CD8-positive, alpha-beta T cell (primary cell): ENCODE measurements at regions of chr6 and their contacts with region 1.

Region 1: DNA sequence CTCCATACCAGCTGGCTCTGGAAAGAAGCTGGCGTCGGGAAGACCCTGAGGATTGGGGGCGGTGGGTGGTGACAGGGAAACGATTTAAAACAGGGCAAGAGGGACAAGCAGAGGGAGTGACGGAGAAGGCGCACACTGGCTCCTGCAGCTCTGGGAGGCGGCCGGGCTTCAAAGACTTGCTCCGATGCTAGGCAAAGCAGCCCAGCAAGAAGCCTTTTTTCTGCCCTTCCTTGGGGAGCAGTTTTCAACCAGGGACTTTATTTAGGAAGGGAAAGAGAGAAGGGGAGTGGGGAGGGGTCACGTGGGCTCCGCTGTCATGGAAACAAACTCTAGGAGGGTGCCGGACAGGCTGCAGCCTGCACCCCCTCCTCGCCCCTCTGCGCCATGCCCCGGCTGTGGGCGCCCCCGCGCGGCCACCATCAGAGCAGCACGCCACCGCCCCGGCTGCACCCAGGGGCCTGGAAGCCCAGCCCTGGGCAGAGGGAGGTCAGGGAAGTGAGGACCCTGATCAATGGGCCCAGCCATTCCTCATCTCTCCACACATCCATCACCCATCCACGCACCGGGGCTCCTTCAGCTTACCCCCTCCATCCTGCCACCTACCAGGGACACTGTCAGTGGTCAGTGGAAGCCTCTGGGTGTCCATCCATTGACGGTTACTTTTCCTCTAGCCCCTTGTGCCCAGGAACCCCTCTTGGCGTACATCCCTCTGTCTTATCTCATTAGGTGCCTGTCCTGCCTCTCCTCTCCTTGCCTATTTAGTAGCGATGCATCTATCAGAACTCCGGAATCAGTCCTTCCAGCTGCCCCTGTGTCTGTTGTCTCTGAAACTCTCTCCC is 66.6 kb upstream of the CCDC167 start:
- DNase-seq: peak; percentile 41 to 89 (median 72)
- ATAC-seq: peak; percentile 95
- H3K4me3 ChIP-seq: peak overlapping the region; percentile 2 to 43
- H3K4me3 Mint-ChIP-seq: peak overlapping the region; percentile 39
- H3K27ac ChIP-seq: no peak overlapping the region
- H3K27ac Mint-ChIP-seq: no peak overlapping the region
- H3K4me1 ChIP-seq: peaks cover 3% of the 10 kb centered on the region
- H3K4me1 Mint-ChIP-seq: peaks cover 13% of the 10 kb centered on the region
- H3K27me3 ChIP-seq: peaks cover 0 to 5% of the 10 kb centered on the region in 2 experiments
- H3K27me3 Mint-ChIP-seq: no peaks in the 10 kb centered on the region
- CTCF ChIP-seq: peak; percentile 94

Region 2: DNA sequence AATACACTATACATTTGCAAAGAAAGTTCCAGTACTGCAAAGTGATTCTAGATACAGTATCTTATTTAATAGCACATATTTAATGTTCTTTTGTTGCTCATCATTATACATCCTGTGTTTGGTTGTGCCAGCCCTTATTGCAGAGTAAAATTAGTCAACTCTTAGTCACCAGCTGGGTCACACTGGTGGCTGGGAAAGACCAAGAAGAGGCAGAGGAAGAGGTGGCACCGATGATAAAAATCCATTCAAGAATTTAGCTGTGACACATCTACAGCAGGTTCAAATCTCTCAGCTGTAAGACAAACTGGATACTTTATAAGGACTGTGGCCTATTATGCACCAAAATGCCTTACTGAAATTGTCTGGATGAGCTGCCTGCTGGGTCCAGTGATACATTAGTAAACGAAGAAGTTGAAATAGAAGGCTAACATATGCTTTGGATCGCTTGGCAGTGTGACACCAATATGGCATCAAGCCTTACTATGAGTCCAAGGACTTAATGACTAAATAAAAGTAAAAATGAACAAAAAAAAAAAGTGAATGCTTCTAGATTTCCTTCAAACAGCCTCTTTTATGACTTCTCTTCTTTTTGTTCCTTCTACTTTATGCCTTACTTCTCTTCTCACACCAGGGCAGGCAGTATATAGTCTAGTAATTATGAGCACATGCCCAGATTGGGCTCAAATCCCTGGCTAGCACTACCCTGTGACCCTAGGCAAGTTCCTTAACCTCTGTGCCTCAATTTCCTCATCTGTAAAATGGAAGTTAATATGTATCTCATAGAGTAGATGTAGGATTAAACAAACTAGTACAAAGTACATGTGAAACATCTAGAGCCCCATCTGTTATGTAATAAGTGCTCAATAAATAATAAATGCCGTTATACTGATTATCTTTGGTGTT is 241.9 kb before region 1 on chr6:
- CTCF ChIA-PET with region 1: interaction called, 8 read pairs
- POLR2A ChIA-PET with region 1: interaction called, 3 read pairs
- intact Hi-C with region 1: loop called in 1 of 2 experiments (anchors 1 kb)
- DNase-seq: no peak
- ATAC-seq: no peak
- H3K4me3 ChIP-seq: no peak overlapping the region
- H3K4me3 Mint-ChIP-seq: no peak overlapping the region
- H3K27ac ChIP-seq: no peak overlapping the region
- H3K27ac Mint-ChIP-seq: no peak overlapping the region
- H3K4me1 ChIP-seq: no peaks in the 10 kb centered on the region
- H3K4me1 Mint-ChIP-seq: no peaks in the 10 kb centered on the region
- H3K27me3 ChIP-seq: no peaks in the 10 kb centered on the region
- H3K27me3 Mint-ChIP-seq: no peaks in the 10 kb centered on the region
- CTCF ChIP-seq: no peak

Region 3: DNA sequence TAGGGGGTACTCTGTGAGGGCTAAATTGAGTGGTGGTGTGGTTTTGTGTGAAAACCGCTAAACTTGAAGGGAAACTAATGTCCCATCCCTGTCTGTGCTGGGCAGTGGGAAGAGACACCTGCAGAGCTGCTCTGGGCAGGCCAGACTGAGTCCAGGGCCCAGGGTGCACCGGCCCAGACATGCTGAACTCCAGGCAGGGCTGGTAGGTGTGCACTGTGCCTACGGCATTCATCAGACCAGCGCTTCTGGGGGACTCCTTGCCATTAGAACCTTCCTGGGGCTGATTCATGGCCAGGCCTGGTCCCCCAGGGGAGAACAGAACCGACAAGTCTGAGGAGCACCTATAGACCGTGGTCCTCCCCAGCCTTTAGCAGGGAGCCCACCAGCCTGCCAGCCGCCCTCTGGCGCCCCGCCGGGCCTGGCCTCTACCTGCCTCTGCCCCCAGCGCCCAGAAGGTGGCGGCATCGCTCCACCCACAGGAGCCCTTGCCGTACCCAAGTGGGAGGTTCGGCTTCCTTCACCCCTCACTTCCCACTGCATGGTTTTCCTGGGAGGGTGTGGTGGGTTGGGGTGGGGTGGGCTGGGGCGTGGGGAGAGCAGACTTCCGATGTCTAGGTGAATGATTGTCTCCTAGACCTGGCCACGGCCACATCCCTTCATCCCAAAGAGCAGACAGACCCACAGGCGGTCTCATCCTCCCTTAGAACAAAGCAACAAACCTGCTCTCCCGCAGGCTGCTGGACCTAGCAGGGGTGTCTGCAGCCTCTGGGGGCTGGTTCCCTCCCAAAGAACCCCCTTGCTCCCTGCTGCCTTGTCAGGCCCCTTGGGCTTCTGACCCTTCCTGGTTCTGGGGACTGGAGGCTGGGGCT is 82.2 kb before region 1 on chr6:
- CTCF ChIA-PET with region 1: interaction called, 191 read pairs
- POLR2A ChIA-PET with region 1: no interaction called
- intact Hi-C with region 1: loop called (anchors 1 kb)
- DNase-seq: peak; percentile 59 to 90 (median 77)
- ATAC-seq: peak; percentile 93
- H3K4me3 ChIP-seq: no peak overlapping the region
- H3K4me3 Mint-ChIP-seq: no peak overlapping the region
- H3K27ac ChIP-seq: peak overlapping the region in 1 of 2 experiments; percentile 47
- H3K27ac Mint-ChIP-seq: no peak overlapping the region
- H3K4me1 ChIP-seq: peaks cover 14% of the 10 kb centered on the region
- H3K4me1 Mint-ChIP-seq: peaks cover 13% of the 10 kb centered on the region
- H3K27me3 ChIP-seq: no peaks in the 10 kb centered on the region
- H3K27me3 Mint-ChIP-seq: no peaks in the 10 kb centered on the region
- CTCF ChIP-seq: peak; percentile 93

Region 4: GRCh38 chr6:37499433-37500293 is 66.7 kb before region 1 on chr6 and contains the start of gene CCDC167:
- CTCF ChIA-PET with region 1: interaction called, 15 read pairs
- POLR2A ChIA-PET with region 1: no interaction called
- intact Hi-C with region 1: no loop called
- DNase-seq: peak; percentile 90 to 98 (median 96)
- ATAC-seq: peak; percentile 69
- H3K4me3 ChIP-seq: peak within 1 kb of the TSS; percentile 86 to 94
- H3K4me3 Mint-ChIP-seq: peak within 1 kb of the TSS; percentile 98
- H3K27ac ChIP-seq: peak within 1 kb of the TSS; percentile 59 to 77
- H3K27ac Mint-ChIP-seq: peak within 1 kb of the TSS; percentile 96
- H3K4me1 ChIP-seq: peaks cover 64% of the 10 kb centered on the region
- H3K4me1 Mint-ChIP-seq: peaks cover 74% of the 10 kb centered on the region
- H3K27me3 ChIP-seq: no peaks in the 10 kb centered on the region
- H3K27me3 Mint-ChIP-seq: no peaks in the 10 kb centered on the region
- CTCF ChIP-seq: no peak
- total RNA-seq, gene CCDC167: 5.4 to 6.2 TPM

Region 5: GRCh38 chr6:37538107-37538506 is 28.2 kb before region 1 on chr6:
- CTCF ChIA-PET with region 1: interaction called, 14 read pairs
- POLR2A ChIA-PET with region 1: no interaction called
- intact Hi-C with region 1: no loop called
- DNase-seq: peak in 1 of 9 experiments; percentile 28
- ATAC-seq: no peak
- H3K4me3 ChIP-seq: no peak overlapping the region
- H3K4me3 Mint-ChIP-seq: no peak overlapping the region
- H3K27ac ChIP-seq: no peak overlapping the region
- H3K27ac Mint-ChIP-seq: peak overlapping the region; percentile 84
- H3K4me1 ChIP-seq: peaks cover 7% of the 10 kb centered on the region
- H3K4me1 Mint-ChIP-seq: peaks cover 22% of the 10 kb centered on the region
- H3K27me3 ChIP-seq: no peaks in the 10 kb centered on the region
- H3K27me3 Mint-ChIP-seq: no peaks in the 10 kb centered on the region
- CTCF ChIP-seq: no peak

Region 6: DNA sequence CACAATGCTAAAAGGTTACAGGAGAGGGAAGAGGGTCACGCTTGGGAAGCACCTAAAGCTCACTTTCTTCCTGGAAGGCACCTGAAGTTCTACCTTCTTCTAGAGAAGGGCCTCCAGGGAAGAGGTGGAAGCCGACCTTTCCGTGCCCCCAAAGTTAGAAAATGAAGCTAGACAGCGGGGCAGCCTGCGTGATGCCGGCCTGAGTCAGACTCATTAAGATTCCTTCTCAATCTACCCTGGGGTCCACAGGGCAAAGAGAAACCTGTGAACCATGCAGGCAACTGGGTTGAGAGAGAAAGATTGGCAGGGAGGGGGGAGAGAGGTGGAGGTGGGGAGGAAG is 11.9 kb before region 1 on chr6:
- CTCF ChIA-PET with region 1: interaction called, 28 read pairs
- POLR2A ChIA-PET with region 1: interaction called, 4 read pairs
- intact Hi-C with region 1: no loop called
- DNase-seq: no peak
- ATAC-seq: no peak
- H3K4me3 ChIP-seq: no peak overlapping the region
- H3K4me3 Mint-ChIP-seq: no peak overlapping the region
- H3K27ac ChIP-seq: no peak overlapping the region
- H3K27ac Mint-ChIP-seq: no peak overlapping the region
- H3K4me1 ChIP-seq: peaks cover 6% of the 10 kb centered on the region
- H3K4me1 Mint-ChIP-seq: peaks cover 30% of the 10 kb centered on the region
- H3K27me3 ChIP-seq: no peaks in the 10 kb centered on the region
- H3K27me3 Mint-ChIP-seq: no peaks in the 10 kb centered on the region
- CTCF ChIP-seq: no peak

Region 7: DNA sequence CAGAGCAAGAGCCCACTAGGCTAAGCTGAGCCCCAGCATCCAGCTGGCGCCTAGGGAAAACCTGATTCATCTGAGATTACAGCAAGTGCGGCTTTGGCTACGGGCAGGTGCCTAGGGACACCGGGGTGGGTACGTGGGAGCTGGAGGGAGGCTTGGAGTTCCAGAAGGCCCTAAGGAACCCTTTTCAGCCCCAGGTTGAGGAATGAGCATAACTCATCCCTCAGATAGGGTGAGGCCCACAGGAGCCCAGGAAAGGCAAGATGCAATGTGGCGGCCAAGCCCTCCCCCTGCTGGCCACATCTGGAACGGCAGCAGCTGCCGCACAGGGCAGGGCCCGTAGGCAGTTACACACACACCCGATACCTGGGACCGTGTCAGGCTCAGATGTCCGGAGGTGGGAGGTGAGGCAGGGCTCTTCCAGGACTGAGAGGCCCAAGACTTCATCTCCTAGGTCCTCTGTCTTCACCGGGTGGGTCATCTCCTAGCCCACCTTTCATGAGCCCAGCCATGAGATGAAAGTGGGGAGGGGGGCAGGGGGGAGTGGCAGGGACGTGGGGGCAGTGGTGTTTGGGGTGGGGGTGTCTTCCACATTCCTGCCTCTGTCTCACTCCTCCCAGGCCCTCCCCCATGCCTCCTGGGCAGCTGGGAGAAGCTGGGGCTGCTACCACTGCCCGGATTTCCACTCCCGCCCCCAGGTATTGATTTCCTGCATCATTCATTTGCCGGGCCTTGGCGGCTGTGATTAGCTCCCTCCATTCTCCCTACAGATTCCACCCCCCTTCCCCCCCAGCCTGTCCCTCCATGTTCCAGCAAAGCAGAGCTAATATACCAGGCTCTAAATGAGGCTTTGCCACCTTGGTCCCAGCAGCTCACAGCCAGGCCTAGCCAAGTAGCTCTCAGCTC is 125.8 kb after region 1 on chr6:
- CTCF ChIA-PET with region 1: interaction called, 12 read pairs
- POLR2A ChIA-PET with region 1: no interaction called
- intact Hi-C with region 1: loop called (anchors 1 kb)
- DNase-seq: peak; percentile 64 to 90 (median 81)
- ATAC-seq: peak; percentile 83
- H3K4me3 ChIP-seq: no peak overlapping the region
- H3K4me3 Mint-ChIP-seq: no peak overlapping the region
- H3K27ac ChIP-seq: no peak overlapping the region
- H3K27ac Mint-ChIP-seq: no peak overlapping the region
- H3K4me1 ChIP-seq: peaks cover 16% of the 10 kb centered on the region
- H3K4me1 Mint-ChIP-seq: peaks cover 10% of the 10 kb centered on the region
- H3K27me3 ChIP-seq: peaks cover 6 to 25% of the 10 kb centered on the region in 2 experiments
- H3K27me3 Mint-ChIP-seq: peaks cover 21% of the 10 kb centered on the region
- CTCF ChIP-seq: peak; percentile 92

Region 8: GRCh38 chr6:38080889-38081288 is 514.6 kb after region 1 on chr6:
- CTCF ChIA-PET with region 1: no interaction called
- POLR2A ChIA-PET with region 1: no interaction called
- intact Hi-C with region 1: no loop called
- DNase-seq: no peak
- ATAC-seq: no peak
- H3K4me3 ChIP-seq: no peak overlapping the region
- H3K4me3 Mint-ChIP-seq: no peak overlapping the region
- H3K27ac ChIP-seq: no peak overlapping the region
- H3K27ac Mint-ChIP-seq: no peak overlapping the region
- H3K4me1 ChIP-seq: no peaks in the 10 kb centered on the region
- H3K4me1 Mint-ChIP-seq: peaks cover 6% of the 10 kb centered on the region
- H3K27me3 ChIP-seq: no peaks in the 10 kb centered on the region
- H3K27me3 Mint-ChIP-seq: no peaks in the 10 kb centered on the region
- CTCF ChIP-seq: no peak